H1 (cell line): ENCODE measurements at regions of chr3 and their contacts with region 1.

Region 1: DNA sequence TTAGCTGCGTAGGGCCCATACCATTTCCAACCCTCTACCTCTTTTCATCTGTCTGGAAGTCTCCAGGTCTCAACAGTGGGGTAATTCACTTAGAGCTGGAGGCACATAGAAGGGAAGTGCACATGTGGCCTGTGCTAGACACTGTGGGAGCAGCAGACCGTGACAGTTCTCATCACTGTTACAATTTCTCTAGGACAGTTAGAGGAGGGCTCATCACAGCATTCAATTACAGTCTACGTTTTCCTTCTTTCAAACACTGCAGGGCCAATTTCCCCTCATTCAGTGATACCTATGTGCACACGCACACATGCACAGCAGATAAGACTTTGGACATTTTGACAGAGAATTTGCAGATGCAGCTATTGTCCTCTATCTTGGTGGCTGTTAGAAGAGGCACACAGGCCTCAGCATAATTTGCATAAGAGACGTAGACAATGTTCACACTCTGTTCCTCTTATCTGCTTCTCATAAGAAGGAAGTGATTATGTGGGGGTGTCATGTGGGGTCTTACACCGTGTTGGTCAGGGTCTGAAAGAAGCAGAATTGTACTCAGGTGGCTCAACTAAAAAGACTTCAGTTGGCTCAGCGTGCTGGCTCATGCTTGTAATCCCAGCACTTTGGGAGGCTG is 12.6 kb upstream of the HRG start:
- DNase-seq: no peak
- H3K4me3 ChIP-seq: no peak overlapping the region
- H3K27ac ChIP-seq: no peak overlapping the region
- H3K4me1 ChIP-seq: peaks cover 0 to 5% (median 3%) of the 10 kb centered on the region in 4 experiments; a peak in 3 of 7 replicates
- H3K27me3 ChIP-seq: no peaks in the 10 kb centered on the region
- CTCF ChIP-seq: no peak
- EP300 ChIP-seq: no peak
- POLR2A ChIP-seq: no peak
- RAD21 ChIP-seq: no peak

Region 2: DNA sequence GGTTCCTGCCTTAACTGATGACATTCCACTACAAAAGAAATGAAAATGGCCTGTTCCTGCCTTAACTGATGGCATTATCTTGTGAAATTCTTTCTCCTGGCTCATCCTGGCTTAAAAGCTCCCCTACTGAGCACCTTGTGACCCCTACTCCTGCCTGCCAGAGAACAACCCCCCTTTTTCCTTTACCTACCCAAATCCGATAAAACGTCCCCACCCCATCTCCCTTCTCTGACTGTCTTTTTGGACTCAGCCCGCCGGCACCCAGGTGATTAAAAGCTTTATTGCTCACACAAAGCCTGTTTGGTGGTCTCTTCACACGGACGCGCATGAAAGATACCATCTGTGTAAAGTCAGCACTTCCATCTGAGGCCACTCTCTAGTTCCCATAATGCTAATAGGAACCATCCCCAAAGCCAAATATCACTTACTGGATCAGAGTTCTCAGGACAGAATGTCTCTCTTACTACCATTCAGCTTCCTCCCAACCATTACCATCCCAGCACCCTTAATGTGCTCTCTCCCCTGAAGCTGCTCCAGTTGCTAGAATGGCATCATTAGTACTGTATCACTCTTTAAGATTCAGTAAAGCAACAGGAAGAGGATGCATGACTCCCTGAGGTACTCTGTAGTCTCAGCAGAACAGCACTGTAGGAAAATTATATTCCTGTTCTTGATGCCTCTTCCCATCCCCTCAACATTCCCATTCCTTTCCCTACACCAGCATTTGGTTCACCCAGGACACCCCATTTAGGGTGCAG is 10.3 kb after region 1 on chr3:
- CTCF ChIA-PET with region 1: interaction called, 12 read pairs
- POLR2A ChIA-PET with region 1: interaction called, 26 read pairs
- DNase-seq: peak in 1 of 2 experiments; percentile 66
- H3K4me3 ChIP-seq: peak overlapping the region in 1 of 4 experiments; percentile 15; a peak in 2 of 8 replicates
- H3K27ac ChIP-seq: peak overlapping the region; percentile 64
- H3K4me1 ChIP-seq: peaks cover 2 to 13% (median 7%) of the 10 kb centered on the region in 4 experiments; a peak in 4 of 7 replicates
- H3K27me3 ChIP-seq: no peaks in the 10 kb centered on the region
- CTCF ChIP-seq: no peak
- EP300 ChIP-seq: no peak
- POLR2A ChIP-seq: peak in 1 of 2 experiments; percentile 41; a peak in 1 of 3 replicates
- RAD21 ChIP-seq: no peak

Region 3: GRCh38 chr3:186871403-186871924 is 218.3 kb after region 1 on chr3:
- CTCF ChIA-PET with region 1: no interaction called
- POLR2A ChIA-PET with region 1: no interaction called
- DNase-seq: no peak
- H3K4me3 ChIP-seq: no peak overlapping the region
- H3K27ac ChIP-seq: no peak overlapping the region
- H3K4me1 ChIP-seq: no peaks in the 10 kb centered on the region
- H3K27me3 ChIP-seq: peaks cover 0 to 1% (median 0%) of the 10 kb centered on the region in 4 experiments; a peak in 1 of 7 replicates
- CTCF ChIP-seq: no peak
- EP300 ChIP-seq: no peak
- POLR2A ChIP-seq: no peak
- RAD21 ChIP-seq: no peak